Activated naive CD4-positive, alpha-beta T cell treated with anti-CD3 and anti-CD28 coated beads for 36 hours (primary cell): ENCODE measurements at regions of chr7 and their contacts with region 1.

Region 1: DNA sequence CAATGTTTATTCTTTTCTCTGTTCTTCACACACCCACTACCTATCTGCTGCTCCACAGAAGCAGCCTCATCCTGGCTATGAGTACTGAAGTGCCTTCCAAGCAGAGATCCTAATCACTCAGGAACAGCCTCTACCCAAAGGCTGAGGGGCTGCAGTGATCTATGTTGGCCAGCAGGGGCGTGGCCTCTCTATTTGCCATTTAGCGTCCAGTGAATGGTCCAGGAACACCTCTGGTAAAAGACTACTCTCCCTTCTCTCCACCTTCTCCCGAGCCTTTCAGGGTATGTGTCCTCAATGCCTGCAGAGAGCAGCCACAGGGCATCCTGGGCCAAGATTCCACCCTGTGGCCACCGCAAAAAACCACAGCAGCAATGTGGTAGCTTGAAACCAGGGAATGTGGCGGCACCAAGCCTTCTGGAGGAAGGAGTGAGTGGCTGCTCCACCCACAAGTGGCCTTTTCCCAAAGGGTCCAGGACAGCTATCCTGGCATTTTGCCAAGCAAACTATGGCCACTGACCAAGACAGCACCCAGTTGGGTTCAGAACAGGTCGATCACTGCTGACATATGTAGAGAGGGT is 70.9 kb downstream of the SYPL1 start:
- DNase-seq: peak; percentile 53
- H3K4me3 Mint-ChIP-seq: no peak overlapping the region
- H3K27ac Mint-ChIP-seq: no peak overlapping the region
- H3K4me1 Mint-ChIP-seq: peaks cover 27% of the 10 kb centered on the region
- H3K27me3 Mint-ChIP-seq: peaks cover 2% of the 10 kb centered on the region

Region 2: GRCh38 chr7:105589356-105590077 is 451.7 kb before region 1 on chr7:
- CTCF ChIA-PET with region 1: no interaction called
- intact Hi-C with region 1: loop called (anchors 2 kb)
- DNase-seq: peak; percentile 82
- H3K4me3 Mint-ChIP-seq: no peak overlapping the region
- H3K27ac Mint-ChIP-seq: no peak overlapping the region
- H3K4me1 Mint-ChIP-seq: peaks cover 4% of the 10 kb centered on the region
- H3K27me3 Mint-ChIP-seq: no peaks in the 10 kb centered on the region

Region 3: DNA sequence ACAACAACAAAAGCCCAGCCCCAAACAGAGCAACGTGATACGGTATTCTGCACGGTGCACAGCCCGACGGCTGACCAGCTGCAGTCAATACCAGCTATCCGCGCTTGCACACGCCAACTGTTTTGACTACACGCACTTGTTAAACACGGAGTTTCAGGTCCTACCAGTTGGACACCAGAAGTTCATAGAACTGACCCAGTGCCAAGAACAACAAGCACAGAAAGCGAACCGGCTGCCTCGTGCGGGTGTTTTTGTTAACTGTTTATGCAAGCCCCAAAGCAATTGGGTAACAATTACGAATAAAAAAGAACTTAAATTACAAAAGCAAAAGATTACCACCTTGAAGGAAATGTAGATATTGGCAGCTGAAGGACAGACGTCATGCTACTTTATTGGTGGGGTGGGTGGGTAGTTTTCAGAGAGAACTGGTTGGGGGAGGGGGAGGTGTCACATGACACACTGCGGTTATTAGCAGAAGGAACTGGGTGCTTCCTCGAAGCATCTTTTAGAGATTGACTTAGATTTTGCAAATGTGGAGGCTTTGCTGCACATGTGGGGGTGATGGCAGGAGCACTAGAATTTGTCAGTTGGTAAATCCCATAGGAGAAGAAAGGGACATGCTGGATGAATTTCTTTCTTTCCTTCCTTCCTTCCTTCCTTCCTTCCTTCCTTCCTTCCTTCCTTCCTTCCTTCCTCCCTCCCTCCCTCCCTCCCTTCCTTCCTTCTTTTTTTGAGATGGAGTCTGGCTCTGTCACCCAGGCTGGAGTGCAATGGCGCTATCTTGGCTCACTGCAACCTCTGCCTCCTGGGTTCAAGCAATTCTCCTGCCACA is 349.3 kb before region 1 on chr7:
- CTCF ChIA-PET with region 1: interaction called, 5 read pairs
- intact Hi-C with region 1: loop called (anchors 1 kb)
- DNase-seq: peak; percentile 80
- H3K4me3 Mint-ChIP-seq: peak overlapping the region; percentile 77
- H3K27ac Mint-ChIP-seq: peak overlapping the region; percentile 79
- H3K4me1 Mint-ChIP-seq: peaks cover 36% of the 10 kb centered on the region
- H3K27me3 Mint-ChIP-seq: no peaks in the 10 kb centered on the region

Region 4: DNA sequence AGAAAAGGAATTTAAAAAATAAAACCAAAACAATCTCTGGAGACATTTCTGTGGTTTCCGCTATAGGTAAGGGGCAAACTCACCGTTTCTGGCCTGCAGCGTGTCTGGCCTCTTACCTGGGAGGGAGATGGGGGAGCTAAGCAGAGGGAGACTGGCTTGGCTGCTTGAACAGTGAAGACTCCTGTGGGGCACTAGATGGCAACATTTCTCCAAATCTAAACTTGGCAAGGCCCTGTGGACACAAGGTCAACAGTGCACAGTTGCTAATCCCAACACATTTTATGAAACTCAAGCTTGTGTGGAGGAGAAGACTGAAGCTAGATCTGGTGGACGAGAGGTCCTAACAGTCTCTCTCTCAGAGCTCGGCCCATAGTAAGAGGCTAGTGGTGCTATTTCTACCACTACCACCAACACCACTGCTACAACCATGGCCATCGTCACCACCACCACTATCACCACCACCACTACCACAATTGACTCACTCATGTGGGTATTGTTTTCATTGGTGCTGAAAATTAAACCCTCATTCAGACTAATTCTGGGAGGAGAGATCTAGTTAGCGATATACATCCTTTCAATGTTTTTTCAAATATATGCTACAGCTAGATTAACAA is 106.5 kb before region 1 on chr7:
- CTCF ChIA-PET with region 1: interaction called, 8 read pairs
- intact Hi-C with region 1: loop called (anchors 1 kb)
- DNase-seq: peak; percentile 20
- H3K4me3 Mint-ChIP-seq: no peak overlapping the region
- H3K27ac Mint-ChIP-seq: no peak overlapping the region
- H3K4me1 Mint-ChIP-seq: peaks cover 12% of the 10 kb centered on the region
- H3K27me3 Mint-ChIP-seq: no peaks in the 10 kb centered on the region

Region 5: GRCh38 chr7:106022193-106022821 is 18.9 kb before region 1 on chr7:
- CTCF ChIA-PET with region 1: interaction called, 70 read pairs
- intact Hi-C with region 1: no loop called
- DNase-seq: peak; percentile 82
- H3K4me3 Mint-ChIP-seq: peak overlapping the region; percentile 19
- H3K27ac Mint-ChIP-seq: peak overlapping the region; percentile 62
- H3K4me1 Mint-ChIP-seq: peaks cover 71% of the 10 kb centered on the region
- H3K27me3 Mint-ChIP-seq: no peaks in the 10 kb centered on the region

Region 6: GRCh38 chr7:106064771-106065585 is 23.7 kb after region 1 on chr7:
- CTCF ChIA-PET with region 1: no interaction called
- intact Hi-C with region 1: no loop called
- DNase-seq: no peak
- H3K4me3 Mint-ChIP-seq: no peak overlapping the region
- H3K27ac Mint-ChIP-seq: no peak overlapping the region
- H3K4me1 Mint-ChIP-seq: peaks cover 24% of the 10 kb centered on the region
- H3K27me3 Mint-ChIP-seq: no peaks in the 10 kb centered on the region

Region 7: GRCh38 chr7:106273009-106273668 is 231.9 kb after region 1 on chr7:
- CTCF ChIA-PET with region 1: no interaction called
- intact Hi-C with region 1: no loop called
- DNase-seq: no peak
- H3K4me3 Mint-ChIP-seq: no peak overlapping the region
- H3K27ac Mint-ChIP-seq: peak overlapping the region; percentile 56
- H3K4me1 Mint-ChIP-seq: peaks cover 46% of the 10 kb centered on the region
- H3K27me3 Mint-ChIP-seq: no peaks in the 10 kb centered on the region